Prostate gland (tissue), 2 donors: ENCODE measurements at regions of chr10 and their contacts with region 1.

Region 1: DNA sequence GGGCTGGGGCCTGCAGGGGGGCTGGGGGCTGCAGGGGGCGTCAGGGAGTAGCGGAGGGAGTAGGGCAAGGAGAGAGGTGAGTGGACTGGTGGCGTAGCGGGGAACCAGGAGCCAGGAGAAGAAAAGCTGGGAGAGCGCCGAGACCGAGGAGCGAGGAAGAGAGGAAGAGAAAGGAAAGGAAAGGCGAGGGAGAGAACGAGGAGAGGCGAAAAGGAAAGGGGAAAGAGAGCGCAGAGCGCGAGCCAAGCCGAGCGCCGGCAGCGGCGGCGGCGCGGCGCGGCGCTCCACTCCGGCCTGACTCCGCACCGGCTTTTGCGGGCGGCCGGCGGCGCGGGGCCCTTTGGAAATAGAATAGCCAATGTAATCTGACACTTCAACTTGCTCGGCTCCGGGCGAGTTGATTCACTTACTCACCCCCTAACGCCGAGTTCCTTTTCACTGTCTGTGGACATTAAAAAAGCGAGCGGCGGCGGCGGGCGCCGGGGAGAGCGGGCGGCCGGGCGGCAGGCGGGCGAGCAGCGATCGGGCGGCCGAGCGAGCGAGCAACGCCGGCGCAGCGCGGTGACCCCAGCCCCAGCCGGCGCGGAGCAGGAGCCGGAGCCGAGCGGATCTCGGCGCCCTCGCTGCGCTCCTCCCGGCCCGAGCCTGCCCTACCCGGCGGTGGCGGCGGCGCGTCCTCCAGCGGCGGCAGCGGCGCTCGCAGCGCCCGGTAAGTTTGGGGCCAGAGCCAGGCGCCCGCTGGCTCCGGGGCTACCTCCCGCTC is at the start of gene ZMIZ1:
- DNase-seq: peak; percentile 92
- H3K4me3 ChIP-seq: peak within 1 kb of the TSS; percentile 92 to 93
- H3K27ac ChIP-seq: peak within 1 kb of the TSS; percentile 97 to 99
- H3K4me1 ChIP-seq: peaks cover 19% of the 10 kb centered on the region
- H3K27me3 ChIP-seq: no peaks in the 10 kb centered on the region
- CTCF ChIP-seq: peak in 2 of 4 experiments; percentile 30 to 34
- POLR2A ChIP-seq: peak; percentile 70
- total RNA-seq, gene ZMIZ1: 69.6 to 78.5 TPM

Region 2: DNA sequence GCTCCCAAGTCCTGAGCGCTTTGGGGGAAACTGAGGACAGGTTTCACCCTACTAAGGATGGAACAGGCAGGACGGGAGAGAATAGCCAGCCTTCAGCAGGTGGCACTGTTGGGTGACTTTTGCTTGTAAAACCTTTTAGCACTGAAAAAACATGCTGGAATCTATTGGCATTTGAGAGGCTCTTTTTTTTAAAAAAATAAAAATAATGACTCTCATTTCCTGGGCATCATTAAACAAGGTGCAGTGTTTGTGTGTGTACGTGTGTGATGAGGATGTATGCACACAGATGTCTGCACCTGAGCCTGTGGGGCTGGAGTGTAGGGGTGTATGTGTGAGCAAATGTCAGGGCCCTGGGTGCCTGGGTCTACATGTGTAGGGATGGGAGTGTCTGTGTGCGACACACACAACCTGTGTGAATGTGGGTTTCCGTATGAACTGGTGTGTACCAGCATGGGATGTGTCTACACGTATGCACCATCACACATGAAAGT is 857.1 kb before region 1 on chr10:
- intact Hi-C with region 1: loop called (anchors 5 kb)
- DNase-seq: peak; percentile 25
- H3K4me3 ChIP-seq: no peak overlapping the region
- H3K27ac ChIP-seq: no peak overlapping the region
- H3K4me1 ChIP-seq: no peaks in the 10 kb centered on the region
- H3K27me3 ChIP-seq: no peaks in the 10 kb centered on the region
- CTCF ChIP-seq: peak; percentile 18 to 64 (median 48)
- POLR2A ChIP-seq: no peak

Region 3: DNA sequence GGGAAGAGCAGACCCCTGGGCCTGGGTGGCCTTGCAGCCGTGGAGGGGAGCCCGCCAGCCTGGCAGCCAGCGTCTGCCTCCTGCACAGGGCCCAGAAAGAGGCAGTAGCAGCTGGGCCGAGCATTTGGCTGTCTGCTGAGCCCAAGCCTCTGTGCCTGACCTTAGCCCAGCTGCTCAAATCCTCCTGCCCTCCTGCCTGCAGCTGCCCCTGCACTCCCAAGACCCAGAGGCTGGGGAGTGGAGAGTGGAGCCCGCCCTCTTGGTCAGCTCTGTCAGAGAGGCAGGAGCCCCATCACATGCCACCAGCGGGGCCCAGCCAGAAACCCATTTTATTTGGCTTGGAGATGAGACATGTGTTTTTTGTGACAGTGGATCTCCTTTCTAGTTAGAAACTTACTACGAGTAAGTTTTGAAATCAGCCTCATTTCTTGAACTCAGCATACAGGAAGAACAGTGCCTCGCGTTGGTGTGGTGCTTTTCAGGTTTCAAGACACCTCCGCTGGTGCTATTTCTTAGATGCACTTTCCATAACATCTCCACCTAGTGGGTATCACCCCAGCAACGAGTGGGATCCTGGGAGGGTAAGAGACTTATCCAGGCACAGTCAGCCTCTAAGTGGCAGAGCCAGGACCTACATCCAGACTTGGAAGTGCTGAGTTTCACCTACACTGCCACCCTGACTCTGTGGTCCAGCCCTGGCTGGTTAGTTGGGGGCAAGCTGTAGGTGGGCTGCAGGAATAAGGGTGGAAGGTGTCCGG is 558.0 kb before region 1 on chr10:
- intact Hi-C with region 1: loop called (anchors 5 kb)
- DNase-seq: no peak
- H3K4me3 ChIP-seq: no peak overlapping the region
- H3K27ac ChIP-seq: peak overlapping the region; percentile 13 to 14
- H3K4me1 ChIP-seq: no peaks in the 10 kb centered on the region
- H3K27me3 ChIP-seq: no peaks in the 10 kb centered on the region
- CTCF ChIP-seq: no peak
- POLR2A ChIP-seq: no peak

Region 4: GRCh38 chr10:79112881-79113431 is 44.2 kb after region 1 on chr10:
- intact Hi-C with region 1: loop called (anchors 2 kb)
- DNase-seq: peak; percentile 50
- H3K4me3 ChIP-seq: no peak overlapping the region
- H3K27ac ChIP-seq: peak overlapping the region; percentile 37 to 71
- H3K4me1 ChIP-seq: peaks cover 16% of the 10 kb centered on the region
- H3K27me3 ChIP-seq: no peaks in the 10 kb centered on the region
- CTCF ChIP-seq: no peak
- POLR2A ChIP-seq: no peak